ENCODE measurements at regions of chr1 and their contacts with region 1.

Region 1: GRCh38 chr1:162349635-162350330 is 26.9 kb downstream of the SPATA46 start:
- DNase-seq: peak; percentile 81
- H3K4me3 Mint-ChIP-seq: peak overlapping the region; percentile 26
- H3K27ac Mint-ChIP-seq: peak overlapping the region; percentile 95
- H3K4me1 Mint-ChIP-seq: peaks cover 29% of the 10 kb centered on the region
- H3K27me3 Mint-ChIP-seq: no peaks in the 10 kb centered on the region
- CTCF ChIP-seq: no peak

Region 2: GRCh38 chr1:162373541-162374375 is 24.0 kb after region 1 on chr1:
- CTCF ChIA-PET with region 1: interaction called, 5 read pairs
- POLR2A ChIA-PET with region 1: interaction called, 11 read pairs
- intact Hi-C with region 1: no loop called
- DNase-seq: peak; percentile 91
- H3K4me3 Mint-ChIP-seq: peak overlapping the region; percentile 6
- H3K27ac Mint-ChIP-seq: peak overlapping the region; percentile 92
- H3K4me1 Mint-ChIP-seq: peaks cover 33% of the 10 kb centered on the region
- H3K27me3 Mint-ChIP-seq: no peaks in the 10 kb centered on the region
- CTCF ChIP-seq: no peak